Astrocyte of the cerebellum (primary cell): ENCODE measurements at regions of chr14 and their contacts with region 1.

Region 1: GRCh38 chr14:79781882-79782281 is 429.4 kb downstream of the DIO2 start:
- DNase-seq: no peak
- H3K4me3 ChIP-seq: no peak overlapping the region
- CTCF ChIP-seq: no peak

Region 2: DNA sequence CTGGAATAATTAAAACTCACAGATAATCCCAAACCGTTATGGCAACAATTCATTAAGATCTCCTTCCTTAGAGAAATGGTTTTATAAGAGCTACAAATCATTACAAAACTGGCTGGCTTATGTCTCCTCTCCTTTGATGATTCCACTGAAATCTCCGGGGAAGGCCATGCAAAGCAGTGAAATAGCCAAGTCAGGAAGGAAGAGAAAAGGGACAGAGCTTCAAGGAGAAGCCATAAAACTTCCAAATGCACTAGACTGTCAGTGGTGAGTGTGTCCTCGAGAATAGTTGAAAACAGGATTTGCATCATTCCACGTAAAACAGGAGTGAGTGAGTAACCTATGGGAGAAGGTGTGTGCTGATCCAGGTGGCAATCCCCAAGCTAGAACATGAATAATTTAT is 99.4 kb after region 1 on chr14:
- in situ Hi-C with region 1: loop called (anchors 5 kb)
- DNase-seq: no peak
- H3K4me3 ChIP-seq: no peak overlapping the region
- CTCF ChIP-seq: no peak